AG04450 (cell line): ENCODE measurements at regions of chr2 and their contacts with region 1.

Region 1: DNA sequence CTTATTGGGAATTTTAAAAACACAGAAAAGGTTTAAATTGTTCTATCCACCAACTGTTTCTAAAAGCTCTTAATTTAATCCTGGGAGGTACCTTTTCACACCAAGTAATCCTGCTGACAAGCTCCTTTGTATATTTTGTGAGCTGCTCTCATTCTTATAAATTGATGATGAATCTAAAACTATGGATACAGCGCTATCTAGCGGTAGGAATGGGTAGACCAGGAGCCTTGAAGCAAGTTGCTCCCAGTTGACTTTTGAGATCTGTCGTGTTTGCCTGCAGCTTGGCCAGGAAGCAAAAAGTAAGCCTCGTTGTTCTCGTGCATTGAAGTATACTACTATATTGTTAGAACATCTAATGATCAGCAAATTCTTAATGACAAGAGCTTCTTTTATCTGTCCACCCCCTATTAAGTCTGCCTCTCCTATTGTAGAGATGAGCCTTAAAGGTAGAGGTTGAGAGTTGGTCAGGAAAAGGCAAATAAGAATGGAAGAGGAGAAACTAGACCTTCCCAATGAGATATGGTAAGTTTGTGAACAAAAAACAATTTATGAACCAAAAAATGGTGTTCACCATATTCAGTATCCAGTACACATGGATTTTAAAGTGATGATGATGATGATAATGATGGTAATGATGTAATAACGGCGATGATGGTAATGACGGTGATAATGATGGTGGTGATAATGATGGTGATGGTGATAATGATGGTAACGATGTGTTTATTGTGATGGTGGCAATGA is 212.0 kb upstream of the NCKAP5 start:
- DNase-seq: peak; percentile 60
- H3K4me3 ChIP-seq: no peak overlapping the region
- H3K27ac ChIP-seq: no peak overlapping the region
- H3K27me3 ChIP-seq: no peaks in the 10 kb centered on the region
- CTCF ChIP-seq: peak; percentile 84

Region 2: GRCh38 chr2:133497270-133497893 is 282.9 kb before region 1 on chr2:
- CTCF ChIA-PET with region 1: interaction called, 12 read pairs
- POLR2A ChIA-PET with region 1: no interaction called
- DNase-seq: no peak
- H3K4me3 ChIP-seq: no peak overlapping the region
- H3K27ac ChIP-seq: no peak overlapping the region
- H3K27me3 ChIP-seq: no peaks in the 10 kb centered on the region
- CTCF ChIP-seq: no peak

Region 3: GRCh38 chr2:133568172-133568571 is 212.1 kb before region 1 on chr2 and contains the start of gene NCKAP5:
- CTCF ChIA-PET with region 1: interaction called, 30 read pairs
- POLR2A ChIA-PET with region 1: no interaction called
- DNase-seq: peak; percentile 43
- H3K4me3 ChIP-seq: peak within 1 kb of the TSS; percentile 67
- H3K27ac ChIP-seq: peak within 1 kb of the TSS; percentile 87
- H3K27me3 ChIP-seq: no peaks in the 10 kb centered on the region
- CTCF ChIP-seq: peak; percentile 51
- polyA plus RNA-seq, gene NCKAP5: 14.8 and 16.6 TPM in 2 replicates

Region 4: DNA sequence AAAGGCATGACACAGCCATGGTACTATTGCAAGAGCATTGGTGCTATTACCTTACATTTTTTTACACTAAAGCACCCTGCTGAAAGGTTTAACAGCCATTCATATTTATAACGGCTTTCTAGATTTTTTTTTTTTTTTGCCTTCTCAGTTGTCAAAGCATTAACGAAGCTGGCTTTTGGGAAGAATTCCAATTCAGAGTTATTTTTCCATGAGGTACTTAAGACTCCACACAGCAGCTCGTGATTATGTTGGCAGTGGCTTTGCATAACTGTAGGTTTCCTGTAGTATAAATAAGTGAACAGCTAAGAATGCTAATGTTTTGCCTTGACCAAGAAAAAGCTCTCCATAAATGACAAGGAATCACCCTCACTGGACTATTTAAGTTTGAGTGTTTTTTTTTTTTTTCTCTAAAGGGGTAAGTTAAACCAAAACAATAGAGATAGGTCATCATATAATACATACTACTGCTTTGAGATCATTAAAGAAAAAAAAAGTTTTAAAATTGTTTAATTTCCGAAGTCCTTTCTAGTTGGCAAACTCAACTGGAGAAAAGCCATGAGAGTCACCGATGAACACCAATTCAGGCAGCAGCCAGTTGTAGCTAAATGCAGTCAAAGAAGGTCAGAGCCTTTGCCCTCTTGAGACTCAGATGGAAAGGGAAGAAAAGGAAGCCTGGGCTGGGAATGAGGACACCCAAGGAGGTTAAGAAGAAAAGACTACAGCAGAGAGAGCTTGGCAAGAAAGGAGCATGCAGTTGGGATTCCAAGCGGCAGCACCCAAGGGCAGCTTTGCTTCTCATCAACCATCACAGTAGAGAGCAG is 24.6 kb before region 1 on chr2:
- CTCF ChIA-PET with region 1: interaction called, 20 read pairs
- POLR2A ChIA-PET with region 1: interaction called, 3 read pairs
- DNase-seq: peak; percentile 99
- H3K4me3 ChIP-seq: no peak overlapping the region
- H3K27ac ChIP-seq: peak overlapping the region; percentile 94
- H3K27me3 ChIP-seq: no peaks in the 10 kb centered on the region
- CTCF ChIP-seq: no peak

Region 5: GRCh38 chr2:133844214-133844892 is 64.1 kb after region 1 on chr2:
- CTCF ChIA-PET with region 1: interaction called, 30 read pairs
- POLR2A ChIA-PET with region 1: no interaction called
- DNase-seq: peak; percentile 77
- H3K4me3 ChIP-seq: no peak overlapping the region
- H3K27ac ChIP-seq: peak overlapping the region; percentile 61
- H3K27me3 ChIP-seq: no peaks in the 10 kb centered on the region
- CTCF ChIP-seq: peak; percentile 89

Region 6: GRCh38 chr2:133953524-133953923 is 173.3 kb after region 1 on chr2:
- CTCF ChIA-PET with region 1: no interaction called
- POLR2A ChIA-PET with region 1: no interaction called
- DNase-seq: no peak
- H3K4me3 ChIP-seq: no peak overlapping the region
- H3K27ac ChIP-seq: no peak overlapping the region
- H3K27me3 ChIP-seq: peaks cover 3% of the 10 kb centered on the region
- CTCF ChIP-seq: no peak